Caco-2 (cell line): ENCODE measurements at regions of chr12 and their contacts with region 1.

Region 1: DNA sequence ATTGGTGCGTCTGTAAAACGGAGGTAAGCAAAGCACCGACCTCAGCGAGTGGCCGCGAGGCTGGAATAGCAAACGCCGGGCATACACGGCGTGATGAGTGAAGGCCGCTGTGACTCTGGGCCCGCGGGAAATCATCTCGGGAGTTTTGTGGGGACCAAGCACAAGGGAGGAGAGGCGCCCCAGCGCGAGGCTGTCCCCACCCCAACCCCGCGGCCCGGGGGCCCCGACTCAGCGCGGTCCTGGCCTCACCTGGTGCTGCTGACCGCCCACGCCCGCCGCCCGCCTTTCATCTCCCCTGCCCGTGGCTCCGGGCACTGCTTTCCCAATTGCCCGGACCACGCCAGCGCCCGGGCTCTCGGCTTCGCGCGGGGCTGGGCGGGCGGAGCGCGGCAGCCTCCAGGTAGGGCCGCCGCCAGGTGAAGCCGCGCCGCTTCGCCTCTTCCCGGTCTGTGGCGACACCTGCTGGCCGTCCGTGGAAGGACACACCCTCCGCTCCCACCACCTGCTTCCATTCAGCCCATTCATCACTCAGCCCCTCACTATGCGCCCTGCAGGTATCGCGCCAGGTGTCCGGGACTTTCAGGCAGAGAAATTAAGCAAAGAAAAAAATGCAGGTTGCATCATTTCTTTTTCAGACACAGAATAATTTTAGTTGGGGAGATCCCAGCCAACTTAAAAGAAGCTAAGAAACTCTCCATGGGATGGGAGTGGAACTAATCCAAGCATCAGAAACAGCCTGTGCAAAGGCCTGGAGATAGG is 360.4 kb downstream of the MED13L start:
- DNase-seq: peak; percentile 74 to 91
- H3K4me3 ChIP-seq: peak overlapping the region; percentile 38
- H3K4me3 Mint-ChIP-seq: peak overlapping the region; percentile 67
- H3K27ac Mint-ChIP-seq: no peak overlapping the region
- H3K4me1 ChIP-seq: no peaks in the 10 kb centered on the region
- H3K4me1 Mint-ChIP-seq: no peaks in the 10 kb centered on the region
- H3K27me3 ChIP-seq: no peaks in the 10 kb centered on the region; the same call in 1 of the 2 replicates
- H3K27me3 Mint-ChIP-seq: peaks cover 4% of the 10 kb centered on the region
- CTCF ChIP-seq: peak; percentile 90 to 94

Region 2: DNA sequence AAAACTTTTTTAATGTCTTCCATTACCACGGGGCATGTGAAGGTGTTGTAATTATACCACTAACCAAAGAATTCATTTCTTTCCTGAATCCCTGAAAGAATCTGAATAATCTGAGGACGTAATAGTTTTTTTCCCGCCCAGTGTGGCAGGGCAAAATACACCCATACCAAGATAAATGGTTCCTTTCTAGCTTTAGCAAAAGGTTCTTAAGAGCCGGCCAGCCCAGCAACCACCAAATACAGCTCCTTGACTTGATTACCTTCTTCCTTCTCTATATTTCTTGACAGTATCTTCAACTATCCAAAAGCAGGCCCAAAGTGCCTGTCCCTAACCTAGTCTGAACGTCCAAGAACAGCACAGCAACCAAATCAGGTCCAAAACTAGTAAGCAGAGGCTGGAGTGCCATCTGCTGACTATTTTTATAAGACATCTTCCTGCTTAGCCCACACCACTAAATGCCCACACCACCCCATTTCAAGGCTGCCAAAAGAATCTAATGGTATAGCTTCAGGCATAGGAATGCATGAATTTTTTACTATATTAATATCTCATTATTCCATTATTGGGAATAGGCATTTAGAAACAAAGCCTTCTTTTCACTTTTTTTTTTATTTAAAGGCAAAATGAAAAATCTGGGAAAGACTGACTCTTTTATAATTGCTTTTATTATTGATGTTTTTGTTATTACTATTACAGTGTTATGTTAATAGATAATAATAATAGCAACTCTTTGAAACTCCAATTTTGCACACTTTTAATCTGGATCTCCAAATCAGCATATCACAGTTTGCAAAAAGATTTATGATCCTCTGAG is 164.0 kb before region 1 on chr12:
- CTCF ChIA-PET with region 1: no interaction called
- POLR2A ChIA-PET with region 1: no interaction called
- intact Hi-C with region 1: loop called (anchors 10 kb)
- DNase-seq: peak; percentile 38 to 62
- H3K4me3 ChIP-seq: no peak overlapping the region
- H3K4me3 Mint-ChIP-seq: no peak overlapping the region
- H3K27ac Mint-ChIP-seq: no peak overlapping the region
- H3K4me1 ChIP-seq: no peaks in the 10 kb centered on the region; the same call in 1 of the 2 replicates
- H3K4me1 Mint-ChIP-seq: no peaks in the 10 kb centered on the region
- H3K27me3 ChIP-seq: no peaks in the 10 kb centered on the region
- H3K27me3 Mint-ChIP-seq: peaks cover 7% of the 10 kb centered on the region
- CTCF ChIP-seq: peak; percentile 47 to 67

Region 3: GRCh38 chr12:115794659-115795081 is 122.4 kb before region 1 on chr12:
- CTCF ChIA-PET with region 1: no interaction called
- POLR2A ChIA-PET with region 1: no interaction called
- intact Hi-C with region 1: loop called (anchors 1 kb)
- DNase-seq: peak; percentile 9 to 32
- H3K4me3 ChIP-seq: no peak overlapping the region
- H3K4me3 Mint-ChIP-seq: no peak overlapping the region
- H3K27ac Mint-ChIP-seq: no peak overlapping the region
- H3K4me1 ChIP-seq: 0 out of 2 replicates have a peak, but pooled peaks cover 4% of the 10 kb centered on the region
- H3K4me1 Mint-ChIP-seq: peaks cover 7% of the 10 kb centered on the region
- H3K27me3 ChIP-seq: no peaks in the 10 kb centered on the region
- H3K27me3 Mint-ChIP-seq: peaks cover 11% of the 10 kb centered on the region
- CTCF ChIP-seq: no peak

Region 4: GRCh38 chr12:115871714-115872113 is 45.4 kb before region 1 on chr12:
- CTCF ChIA-PET with region 1: interaction called, 4 read pairs
- POLR2A ChIA-PET with region 1: no interaction called
- intact Hi-C with region 1: loop called (anchors 1 kb)
- DNase-seq: peak; percentile 39 to 48
- H3K4me3 ChIP-seq: no peak overlapping the region
- H3K4me3 Mint-ChIP-seq: no peak overlapping the region
- H3K27ac Mint-ChIP-seq: peak overlapping the region; percentile 27
- H3K4me1 ChIP-seq: peaks cover 22% of the 10 kb centered on the region
- H3K4me1 Mint-ChIP-seq: peaks cover 26% of the 10 kb centered on the region
- H3K27me3 ChIP-seq: no peaks in the 10 kb centered on the region
- H3K27me3 Mint-ChIP-seq: no peaks in the 10 kb centered on the region
- CTCF ChIP-seq: peak; percentile 54 to 59

Region 5: DNA sequence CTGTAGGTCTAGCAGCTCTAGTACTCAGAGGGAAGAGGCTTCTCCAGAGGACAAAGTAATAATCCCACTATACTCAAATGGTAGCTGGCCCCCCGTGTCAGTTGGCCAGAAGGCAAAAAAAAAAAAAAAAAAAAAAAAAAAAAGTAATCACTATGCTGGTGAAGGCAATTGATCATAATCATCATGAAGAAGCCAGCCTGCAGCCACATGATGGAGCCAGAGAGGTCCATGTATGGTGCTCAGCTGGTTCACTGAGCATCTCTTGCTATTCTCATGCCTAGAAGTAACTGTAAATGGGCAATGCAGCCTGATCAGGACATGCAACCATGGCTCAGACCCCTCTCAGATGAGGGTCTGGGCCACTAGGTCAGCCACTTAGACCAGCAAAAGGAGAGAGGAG is 18.4 kb before region 1 on chr12:
- CTCF ChIA-PET with region 1: interaction called, 3 read pairs
- POLR2A ChIA-PET with region 1: no interaction called
- intact Hi-C with region 1: loop called (anchors 1 kb)
- DNase-seq: peak in 1 of 2 experiments; percentile 17
- H3K4me3 ChIP-seq: no peak overlapping the region
- H3K4me3 Mint-ChIP-seq: no peak overlapping the region
- H3K27ac Mint-ChIP-seq: no peak overlapping the region
- H3K4me1 ChIP-seq: no peaks in the 10 kb centered on the region
- H3K4me1 Mint-ChIP-seq: no peaks in the 10 kb centered on the region
- H3K27me3 ChIP-seq: no peaks in the 10 kb centered on the region; the same call in 1 of the 2 replicates
- H3K27me3 Mint-ChIP-seq: peaks cover 20% of the 10 kb centered on the region
- CTCF ChIP-seq: peak in 1 of 2 experiments; percentile 27

Region 6: GRCh38 chr12:116015525-116015924 is 98.4 kb after region 1 on chr12:
- CTCF ChIA-PET with region 1: no interaction called
- POLR2A ChIA-PET with region 1: no interaction called
- intact Hi-C with region 1: no loop called
- DNase-seq: peak in 1 of 2 experiments; percentile 20
- H3K4me3 ChIP-seq: no peak overlapping the region
- H3K4me3 Mint-ChIP-seq: no peak overlapping the region
- H3K27ac Mint-ChIP-seq: no peak overlapping the region
- H3K4me1 ChIP-seq: no peaks in the 10 kb centered on the region
- H3K4me1 Mint-ChIP-seq: no peaks in the 10 kb centered on the region
- H3K27me3 ChIP-seq: no peaks in the 10 kb centered on the region
- H3K27me3 Mint-ChIP-seq: no peaks in the 10 kb centered on the region
- CTCF ChIP-seq: peak; percentile 16 to 49